CD4-positive, alpha-beta memory T cell (primary cell): ENCODE measurements at regions of chr11 and their contacts with region 1.

Region 1: GRCh38 chr11:78139422-78140391 is at the start of gene ALG8:
- DNase-seq: peak; percentile 95 to 96 (median 96)
- H3K4me3 ChIP-seq: peak within 1 kb of the TSS; percentile 87 to 88
- H3K4me3 Mint-ChIP-seq: peak within 1 kb of the TSS; percentile 91 to 99 (median 95)
- H3K27ac ChIP-seq: peak within 1 kb of the TSS; percentile 74
- H3K27ac Mint-ChIP-seq: peak within 1 kb of the TSS; percentile 91 to 98 (median 95)
- H3K4me1 ChIP-seq: peaks cover 21% of the 10 kb centered on the region
- H3K4me1 Mint-ChIP-seq: peaks cover 24 to 37% (median 30%) of the 10 kb centered on the region in 4 donors
- H3K27me3 ChIP-seq: no peaks in the 10 kb centered on the region
- H3K27me3 Mint-ChIP-seq: no peaks in the 10 kb centered on the region
- total RNA-seq, gene ALG8: 27.6 to 31.2 TPM

Region 2: DNA sequence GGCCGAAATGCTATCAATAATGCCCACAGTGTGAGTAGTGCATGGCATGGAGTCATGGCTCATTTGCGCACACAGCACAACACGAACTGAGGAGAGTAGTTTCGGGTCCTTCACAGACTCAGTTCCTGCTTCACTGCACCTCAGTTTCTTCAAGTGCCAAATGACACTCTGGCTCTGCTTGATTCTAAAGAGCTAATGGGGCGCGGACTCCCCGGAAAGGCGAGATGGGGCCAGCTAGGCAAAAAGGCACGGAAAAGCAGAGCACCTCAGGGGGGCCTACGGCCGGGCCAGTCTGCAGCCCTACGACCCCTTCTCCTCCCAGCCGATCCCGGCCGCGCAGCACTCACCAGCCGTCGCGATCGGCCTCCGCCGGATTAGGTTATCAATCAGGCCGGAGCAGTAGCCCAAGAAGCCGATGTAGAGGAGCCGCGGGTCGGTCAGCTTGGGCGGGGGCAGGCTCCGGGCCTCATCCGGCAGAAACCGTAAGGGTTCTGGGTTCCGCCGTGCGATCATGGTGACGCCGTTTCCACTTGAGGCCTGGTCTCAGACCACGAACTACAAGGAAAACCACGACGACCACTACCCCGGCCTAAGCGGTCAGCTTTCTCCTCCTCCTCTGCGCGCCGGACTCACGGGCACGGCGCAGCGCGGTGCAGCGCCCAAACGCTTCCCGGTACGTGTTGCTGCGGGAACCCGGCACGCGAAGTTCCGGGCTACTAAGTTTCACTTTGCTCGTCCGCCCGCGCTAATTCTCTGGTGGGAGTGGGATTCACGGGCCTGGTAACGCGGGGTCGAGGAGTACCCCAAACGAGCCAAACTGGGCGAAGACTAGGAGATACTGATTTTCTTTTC is 60.2 kb before region 1 on chr11 and contains the start of gene NDUFC2:
- CTCF ChIA-PET with region 1: no interaction called
- POLR2A ChIA-PET with region 1: interaction called, 12 read pairs
- intact Hi-C with region 1: loop called (anchors 1 kb)
- DNase-seq: peak; percentile 60 to 66 (median 64)
- H3K4me3 ChIP-seq: peak within 1 kb of the TSS; percentile 77 to 98
- H3K4me3 Mint-ChIP-seq: peak within 1 kb of the TSS; percentile 93 to 98 (median 96)
- H3K27ac ChIP-seq: peak within 1 kb of the TSS; percentile 75
- H3K27ac Mint-ChIP-seq: peak within 1 kb of the TSS; percentile 87 to 98 (median 96)
- H3K4me1 ChIP-seq: peaks cover 55% of the 10 kb centered on the region
- H3K4me1 Mint-ChIP-seq: peaks cover 34 to 72% (median 49%) of the 10 kb centered on the region in 4 donors
- H3K27me3 ChIP-seq: no peaks in the 10 kb centered on the region
- H3K27me3 Mint-ChIP-seq: no peaks in the 10 kb centered on the region
- total RNA-seq, gene NDUFC2: 80.5 to 86.5 TPM

Region 3: DNA sequence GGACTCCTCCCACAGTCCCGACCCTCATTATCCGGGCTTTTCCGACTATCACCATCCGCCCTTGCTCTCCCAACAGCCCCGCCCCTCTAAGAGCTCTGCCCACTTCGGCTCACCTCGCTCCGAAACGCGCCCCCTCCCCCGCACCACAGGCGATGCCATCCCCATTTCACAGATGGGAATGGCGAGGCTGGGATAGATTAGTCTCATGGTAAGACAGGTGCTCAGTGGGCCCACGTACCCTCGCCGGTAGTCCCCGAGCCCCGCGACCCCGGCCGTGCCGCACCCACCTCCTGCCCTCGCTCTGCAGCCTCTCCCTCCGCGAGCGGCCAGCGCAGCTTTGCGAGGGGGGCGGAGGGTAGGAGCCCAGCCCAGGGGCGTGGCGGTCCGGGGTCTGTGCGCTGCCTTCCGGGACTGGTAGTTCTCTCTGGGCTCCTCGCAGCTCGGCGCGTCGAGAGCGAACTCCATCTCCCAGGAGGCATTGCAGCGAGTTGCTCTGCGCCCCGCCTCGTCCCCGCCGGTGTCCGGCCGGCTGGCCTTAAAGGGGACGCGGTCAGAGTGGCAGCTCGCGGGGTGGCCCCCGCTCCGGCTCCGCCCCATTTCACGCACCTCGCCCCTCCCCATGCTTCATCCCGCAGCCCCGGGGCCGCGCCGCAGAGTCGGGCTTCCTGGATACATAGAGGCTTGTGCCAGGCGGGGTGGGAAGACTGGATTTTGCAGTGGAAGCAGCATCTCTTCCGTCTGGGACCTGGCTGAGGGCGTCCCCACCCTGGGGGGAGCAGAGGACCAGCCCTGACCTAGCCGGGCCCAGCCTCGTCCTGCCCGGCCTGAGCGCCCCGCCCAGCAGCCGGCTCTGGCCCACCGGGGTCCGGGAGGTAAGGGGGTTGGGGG is 48.8 kb after region 1 on chr11 and contains the starts of genes KCTD21 and USP35:
- CTCF ChIA-PET with region 1: no interaction called
- POLR2A ChIA-PET with region 1: interaction called, 29 read pairs
- intact Hi-C with region 1: loop called (anchors 1 kb)
- DNase-seq: peak; percentile 85 to 92 (median 87)
- H3K4me3 ChIP-seq: peak within 1 kb of the TSS; percentile 88 to 90
- H3K4me3 Mint-ChIP-seq: peak within 1 kb of the TSS; percentile 98 to 99 (median 99)
- H3K27ac ChIP-seq: peak within 1 kb of the TSS; percentile 85
- H3K27ac Mint-ChIP-seq: peak within 1 kb of the TSS; percentile 95 to 99 (median 98)
- H3K4me1 ChIP-seq: peaks cover 39% of the 10 kb centered on the region
- H3K4me1 Mint-ChIP-seq: peaks cover 33 to 63% (median 47%) of the 10 kb centered on the region in 4 donors
- H3K27me3 ChIP-seq: no peaks in the 10 kb centered on the region
- H3K27me3 Mint-ChIP-seq: no peaks in the 10 kb centered on the region
- total RNA-seq, gene KCTD21: 8.0 to 8.6 TPM
- total RNA-seq, gene USP35: 12.4 to 14.3 TPM

Region 4: GRCh38 chr11:78202733-78203167 is 63.0 kb after region 1 on chr11:
- CTCF ChIA-PET with region 1: interaction called, 4 read pairs
- POLR2A ChIA-PET with region 1: interaction called, 21 read pairs
- intact Hi-C with region 1: loop called (anchors 1 kb)
- DNase-seq: peak; percentile 76 to 94 (median 79)
- H3K4me3 ChIP-seq: peak overlapping the region; percentile 41 to 54
- H3K4me3 Mint-ChIP-seq: peak overlapping the region; percentile 81 to 94 (median 86)
- H3K27ac ChIP-seq: peak overlapping the region; percentile 73
- H3K27ac Mint-ChIP-seq: peak overlapping the region; percentile 91 to 99 (median 97)
- H3K4me1 ChIP-seq: peaks cover 39% of the 10 kb centered on the region
- H3K4me1 Mint-ChIP-seq: peaks cover 31 to 54% (median 33%) of the 10 kb centered on the region in 4 donors
- H3K27me3 ChIP-seq: no peaks in the 10 kb centered on the region
- H3K27me3 Mint-ChIP-seq: no peaks in the 10 kb centered on the region

Region 5: GRCh38 chr11:78574386-78575381 is 435.0 kb after region 1 on chr11 and contains the start of gene NARS2:
- CTCF ChIA-PET with region 1: no interaction called
- POLR2A ChIA-PET with region 1: interaction called, 16 read pairs
- intact Hi-C with region 1: loop called (anchors 2 kb)
- DNase-seq: peak; percentile 94 to 98 (median 96)
- H3K4me3 ChIP-seq: peak within 1 kb of the TSS; percentile 46 to 47
- H3K4me3 Mint-ChIP-seq: peak within 1 kb of the TSS; percentile 92 to 99 (median 97)
- H3K27ac ChIP-seq: peak within 1 kb of the TSS; percentile 86
- H3K27ac Mint-ChIP-seq: peak within 1 kb of the TSS; percentile 91 to 100 (median 98)
- H3K4me1 ChIP-seq: peaks cover 28% of the 10 kb centered on the region
- H3K4me1 Mint-ChIP-seq: peaks cover 20 to 41% (median 29%) of the 10 kb centered on the region in 4 donors
- H3K27me3 ChIP-seq: no peaks in the 10 kb centered on the region
- H3K27me3 Mint-ChIP-seq: no peaks in the 10 kb centered on the region
- total RNA-seq, gene NARS2: 16.9 to 18.4 TPM